ENCODE measurements at regions of chr14 and their contacts with region 1.

Region 1: GRCh38 chr14:32252030-32252670 is 49.1 kb upstream of the RNU6-8 start:
- DNase-seq: peak in 1 of 2 donors; percentile 77
- H3K4me3 ChIP-seq: no peak overlapping the region
- H3K27ac ChIP-seq: no peak overlapping the region
- H3K4me1 ChIP-seq: peaks cover 0 to 7% of the 10 kb centered on the region in 2 donors
- H3K27me3 ChIP-seq: no peaks in the 10 kb centered on the region
- CTCF ChIP-seq: peak; percentile 59 to 92 (median 70)

Region 2: DNA sequence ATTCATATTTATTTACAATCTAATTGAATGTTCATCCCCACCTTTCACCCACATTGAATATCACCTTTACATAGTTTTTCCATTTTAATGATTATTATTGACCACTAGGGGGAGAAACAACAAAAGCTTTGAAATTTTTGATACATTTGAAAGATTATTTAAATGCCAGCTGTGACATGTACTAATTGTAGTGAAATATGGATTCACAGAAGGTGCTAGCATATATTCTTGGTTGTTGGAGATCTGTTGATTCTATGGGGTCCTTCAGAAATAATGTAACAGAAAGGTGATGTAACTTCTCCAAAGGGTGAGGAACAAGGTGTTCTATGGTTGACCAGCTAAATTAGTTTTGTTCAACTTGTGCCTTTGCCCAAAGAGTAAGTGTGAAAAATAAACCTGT is 741.9 kb before region 1 on chr14:
- intact Hi-C with region 1: loop called (anchors 5 kb)
- DNase-seq: no peak
- H3K4me3 ChIP-seq: no peak overlapping the region
- H3K27ac ChIP-seq: no peak overlapping the region
- H3K4me1 ChIP-seq: peaks cover 0 to 7% of the 10 kb centered on the region in 2 donors
- H3K27me3 ChIP-seq: no peaks in the 10 kb centered on the region
- CTCF ChIP-seq: peak; percentile 36 to 63 (median 41)

Region 3: DNA sequence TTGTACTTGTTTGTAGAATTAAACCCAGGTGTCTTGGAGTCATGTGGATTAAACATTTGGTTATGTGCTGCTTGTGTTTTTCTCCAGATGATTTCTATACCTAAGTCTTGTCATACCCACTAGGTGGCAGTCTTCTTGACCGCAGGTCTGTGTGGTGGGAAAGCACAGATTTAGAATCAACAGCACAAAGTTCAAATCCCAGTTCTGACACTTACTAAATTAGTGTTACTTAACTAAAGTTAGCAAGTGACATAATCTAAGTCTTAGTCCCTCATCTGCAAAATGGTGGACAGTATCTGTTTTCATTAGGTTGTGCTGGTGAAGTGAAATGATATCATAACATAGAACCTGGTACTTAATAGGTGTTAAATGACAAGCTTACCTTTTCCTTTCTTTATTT is 326.0 kb before region 1 on chr14:
- intact Hi-C with region 1: loop called (anchors 5 kb)
- DNase-seq: no peak
- H3K4me3 ChIP-seq: no peak overlapping the region
- H3K27ac ChIP-seq: no peak overlapping the region
- H3K4me1 ChIP-seq: peaks cover 0 to 5% of the 10 kb centered on the region in 2 donors
- H3K27me3 ChIP-seq: no peaks in the 10 kb centered on the region
- CTCF ChIP-seq: peak in 2 of 3 experiments; percentile 12 to 41

Region 4: DNA sequence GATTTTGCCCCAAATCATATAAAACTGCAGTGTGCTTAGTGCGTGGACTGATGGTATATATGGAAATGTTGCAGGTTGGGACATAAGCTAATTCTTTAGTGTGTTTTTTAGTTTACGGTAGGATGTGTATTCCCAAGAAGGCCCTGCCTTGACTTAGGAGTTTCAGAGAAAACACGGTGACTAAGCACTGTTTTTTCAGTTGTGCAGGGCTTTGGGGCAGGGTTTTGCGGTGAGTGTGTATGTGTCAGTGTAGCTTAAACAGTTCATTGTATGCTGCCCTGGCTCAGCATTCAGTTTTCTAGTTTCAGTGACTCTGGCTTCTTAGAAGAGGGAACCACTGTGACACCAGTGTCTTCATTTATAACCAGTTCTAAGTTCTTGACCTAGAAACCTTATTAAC is 178.2 kb after region 1 on chr14:
- intact Hi-C with region 1: loop called (anchors 10 kb)
- DNase-seq: no peak
- H3K4me3 ChIP-seq: no peak overlapping the region
- H3K27ac ChIP-seq: peak overlapping the region in 1 of 2 donors; percentile 85
- H3K4me1 ChIP-seq: peaks cover 0 to 4% of the 10 kb centered on the region in 2 donors
- H3K27me3 ChIP-seq: no peaks in the 10 kb centered on the region
- CTCF ChIP-seq: no peak

Region 5: GRCh38 chr14:32509632-32510187 is 257.6 kb after region 1 on chr14:
- intact Hi-C with region 1: loop called (anchors 5 kb)
- DNase-seq: peak; percentile 46 to 91
- H3K4me3 ChIP-seq: peak overlapping the region in 1 of 2 donors; percentile 50
- H3K27ac ChIP-seq: peak overlapping the region; percentile 88 to 91
- H3K4me1 ChIP-seq: peaks cover 0 to 27% of the 10 kb centered on the region in 2 donors
- H3K27me3 ChIP-seq: no peaks in the 10 kb centered on the region
- CTCF ChIP-seq: no peak

Measured in ascending aorta (tissue), 2 donors.